GM12878 (cell line): ENCODE measurements at regions of chr20 and their contacts with region 1.

Region 1: GRCh38 chr20:53869466-53870258 is 200.7 kb downstream of the BCAS1 start:
- DNase-seq: peak; percentile 91
- ATAC-seq: peak; percentile 73
- H3K4me3 ChIP-seq: no peak overlapping the region
- H3K27ac ChIP-seq: peak overlapping the region; percentile 68
- H3K4me1 ChIP-seq: peaks cover 51% of the 10 kb centered on the region
- H3K27me3 ChIP-seq: no peaks in the 10 kb centered on the region
- CTCF ChIP-seq: peak; percentile 85 to 93 (median 87)
- EP300 ChIP-seq: peak in 1 of 2 experiments; percentile 61; a peak in 2 of 4 replicates
- POLR2A ChIP-seq: no peak
- RAD21 ChIP-seq: peak; percentile 86

Region 2: GRCh38 chr20:53652090-53652858 is 217.4 kb before region 1 on chr20:
- CTCF ChIA-PET with region 1: interaction called, 3 read pairs
- POLR2A ChIA-PET with region 1: interaction called, 4 read pairs
- RAD21 ChIA-PET with region 1: interaction called, 10 read pairs
- SMC1A ChIA-PET with region 1: interaction called, 12 read pairs
- in situ Hi-C with region 1: no loop called
- intact Hi-C with region 1: loop called (anchors 2 kb)
- DNase-seq: peak; percentile 93
- ATAC-seq: peak; percentile 76
- H3K4me3 ChIP-seq: peak overlapping the region; percentile 30; the same call in 1 of the 2 replicates
- H3K27ac ChIP-seq: peak overlapping the region; percentile 99
- H3K4me1 ChIP-seq: peaks cover 39% of the 10 kb centered on the region
- H3K27me3 ChIP-seq: no peaks in the 10 kb centered on the region
- CTCF ChIP-seq: no peak
- EP300 ChIP-seq: peak; percentile 68 to 72; a peak in 2 of 4 replicates
- POLR2A ChIP-seq: no peak
- RAD21 ChIP-seq: peak; percentile 17; the same call in 1 of the 2 replicates

Region 3: DNA sequence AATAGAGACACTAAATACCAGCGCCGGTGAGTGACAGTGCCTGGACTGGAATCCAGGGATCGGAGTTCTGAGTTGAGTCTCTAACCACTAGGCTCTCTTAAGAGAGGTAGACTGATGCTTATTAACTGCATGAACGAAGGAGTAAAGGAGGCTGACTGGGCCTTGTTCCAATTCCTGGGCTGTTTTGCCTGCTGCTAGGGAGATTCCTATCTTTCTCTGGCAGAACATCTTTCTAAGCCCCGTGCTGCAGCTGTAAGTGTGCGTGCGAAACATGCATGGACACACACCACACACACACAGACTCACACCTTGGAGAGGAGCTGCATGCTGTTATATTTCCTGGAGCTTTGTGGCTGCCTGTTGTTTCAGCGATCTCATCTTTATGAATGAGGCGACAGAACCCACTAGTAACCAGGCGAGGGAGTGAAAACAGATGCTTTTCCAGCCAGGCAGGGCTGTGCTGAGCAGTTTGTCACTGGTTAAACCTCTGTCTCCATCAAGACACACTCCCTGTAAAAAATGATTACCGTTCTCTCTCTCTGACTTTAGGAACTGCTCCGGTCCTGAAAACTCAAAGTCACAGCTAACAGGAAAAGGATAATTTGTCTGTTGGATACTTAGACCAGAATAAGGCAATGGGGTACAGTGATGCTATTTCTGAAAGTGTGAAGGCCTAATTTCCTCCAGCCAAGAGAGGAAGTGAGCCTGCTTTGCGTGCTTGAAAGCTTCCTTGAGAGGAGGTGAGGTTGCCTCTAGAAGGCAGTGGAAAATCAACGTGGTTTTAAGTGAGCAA is 118.6 kb before region 1 on chr20:
- CTCF ChIA-PET with region 1: interaction called, 7 read pairs
- POLR2A ChIA-PET with region 1: interaction called, 3 read pairs
- RAD21 ChIA-PET with region 1: interaction called, 30 read pairs
- SMC1A ChIA-PET with region 1: interaction called, 20 read pairs
- in situ Hi-C with region 1: no loop called
- intact Hi-C with region 1: loop called (anchors 5 kb)
- DNase-seq: peak; percentile 69
- ATAC-seq: peak; percentile 83
- H3K4me3 ChIP-seq: peak overlapping the region; percentile 2; the same call in 1 of the 2 replicates
- H3K27ac ChIP-seq: peak overlapping the region; percentile 99
- H3K4me1 ChIP-seq: peaks cover 64% of the 10 kb centered on the region
- H3K27me3 ChIP-seq: no peaks in the 10 kb centered on the region
- CTCF ChIP-seq: no peak
- EP300 ChIP-seq: peak; percentile 56 to 89; a peak in 3 of 4 replicates
- POLR2A ChIP-seq: peak; percentile 45; the same call in 1 of the 2 replicates
- RAD21 ChIP-seq: peak; percentile 47

Region 4: DNA sequence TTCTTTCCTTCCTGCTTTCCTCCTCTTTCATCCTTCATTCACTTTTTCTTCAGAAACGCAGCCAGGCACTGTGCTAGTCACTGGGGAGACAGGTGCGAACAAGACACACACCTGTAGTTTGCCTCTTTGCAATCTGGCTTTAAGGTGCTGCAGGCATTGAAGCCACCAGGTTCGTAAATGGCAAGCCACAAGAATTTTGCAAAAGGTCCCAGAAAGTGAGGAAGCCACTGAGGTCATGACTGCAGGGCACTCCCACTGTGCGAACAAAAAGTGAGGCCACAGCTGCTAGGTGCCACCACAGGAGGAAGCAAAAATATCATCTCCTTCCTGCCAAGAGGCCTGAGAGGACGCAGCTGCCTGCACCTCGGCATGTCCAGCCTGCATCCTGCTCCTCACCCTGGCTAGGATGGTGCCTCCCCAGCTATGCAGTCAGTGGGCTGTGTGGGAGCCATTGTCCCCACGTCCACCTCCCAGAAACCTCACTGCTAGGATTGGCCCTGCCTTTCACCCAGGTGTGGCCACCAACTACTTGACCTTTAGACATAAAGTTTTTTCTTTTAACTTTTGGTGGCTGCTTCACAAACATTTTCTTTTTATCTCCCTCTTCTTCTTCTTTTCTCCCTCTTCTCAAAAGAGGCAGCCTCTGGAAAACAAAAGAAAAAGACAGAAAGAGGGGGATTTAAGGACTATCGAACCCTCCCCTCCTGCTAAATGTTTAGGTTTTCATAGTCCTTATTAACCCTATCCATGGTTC is 30.1 kb before region 1 on chr20:
- CTCF ChIA-PET with region 1: interaction called, 6 read pairs
- POLR2A ChIA-PET with region 1: interaction called, 16 read pairs
- RAD21 ChIA-PET with region 1: interaction called, 18 read pairs
- SMC1A ChIA-PET with region 1: interaction called, 49 read pairs
- in situ Hi-C with region 1: no loop called
- intact Hi-C with region 1: loop called (anchors 5 kb)
- DNase-seq: peak; percentile 96
- ATAC-seq: peak; percentile 78
- H3K4me3 ChIP-seq: no peak overlapping the region
- H3K27ac ChIP-seq: peak overlapping the region; percentile 70
- H3K4me1 ChIP-seq: peaks cover 47% of the 10 kb centered on the region
- H3K27me3 ChIP-seq: no peaks in the 10 kb centered on the region
- CTCF ChIP-seq: no peak
- EP300 ChIP-seq: peak; percentile 39 to 54; a peak in 2 of 4 replicates
- POLR2A ChIP-seq: peak; percentile 53; the same call in 1 of the 2 replicates
- RAD21 ChIP-seq: 0 out of 2 replicates have a peak, but pooled peaks have one; percentile 3

Region 5: DNA sequence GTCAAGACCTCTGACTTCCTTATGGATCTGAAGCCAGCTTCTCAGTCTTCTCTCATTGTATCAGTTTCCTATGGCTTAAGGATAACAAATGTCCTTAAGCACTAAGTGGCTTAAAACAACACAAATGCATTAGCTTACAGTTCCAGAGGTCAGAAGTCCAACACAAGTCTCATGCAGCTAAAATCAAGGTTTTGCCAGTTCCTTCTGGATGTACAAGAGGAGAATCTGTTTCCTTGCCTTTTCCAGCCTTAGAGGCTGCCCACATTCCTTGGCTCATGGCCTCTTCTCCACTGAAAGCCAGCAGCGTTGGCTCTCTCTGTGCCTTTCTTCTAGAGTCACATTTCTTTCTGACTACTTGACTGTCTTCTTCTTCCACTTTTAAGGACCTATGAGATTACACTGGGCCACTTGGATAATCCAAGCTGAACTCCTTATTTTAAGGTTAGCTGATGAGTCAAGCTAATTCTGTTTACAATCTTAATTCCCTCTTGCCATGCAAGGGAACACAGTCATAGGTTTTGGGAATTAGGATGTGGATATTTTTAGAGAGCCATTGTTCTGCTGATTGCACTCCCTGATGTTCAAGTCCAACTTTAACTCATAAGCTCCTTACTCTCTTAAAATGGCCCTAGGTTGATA is 21.8 kb after region 1 on chr20:
- CTCF ChIA-PET with region 1: interaction called, 17 read pairs
- POLR2A ChIA-PET with region 1: interaction called, 10 read pairs
- RAD21 ChIA-PET with region 1: interaction called, 26 read pairs
- SMC1A ChIA-PET with region 1: interaction called, 56 read pairs
- in situ Hi-C with region 1: no loop called
- intact Hi-C with region 1: loop called (anchors 1 kb)
- DNase-seq: no peak
- ATAC-seq: no peak
- H3K4me3 ChIP-seq: no peak overlapping the region
- H3K27ac ChIP-seq: no peak overlapping the region
- H3K4me1 ChIP-seq: peaks cover 25% of the 10 kb centered on the region
- H3K27me3 ChIP-seq: no peaks in the 10 kb centered on the region
- CTCF ChIP-seq: no peak
- EP300 ChIP-seq: no peak
- POLR2A ChIP-seq: no peak
- RAD21 ChIP-seq: no peak

Region 6: GRCh38 chr20:53915446-53916172 is 45.9 kb after region 1 on chr20:
- CTCF ChIA-PET with region 1: interaction called, 30 read pairs
- POLR2A ChIA-PET with region 1: interaction called, 17 read pairs
- RAD21 ChIA-PET with region 1: interaction called, 74 read pairs
- SMC1A ChIA-PET with region 1: interaction called, 59 read pairs
- in situ Hi-C with region 1: no loop called
- intact Hi-C with region 1: loop called (anchors 1 kb)
- DNase-seq: peak; percentile 89
- ATAC-seq: peak; percentile 84
- H3K4me3 ChIP-seq: peak overlapping the region; percentile 56
- H3K27ac ChIP-seq: peak overlapping the region; percentile 97
- H3K4me1 ChIP-seq: peaks cover 31% of the 10 kb centered on the region
- H3K27me3 ChIP-seq: no peaks in the 10 kb centered on the region
- CTCF ChIP-seq: peak; percentile 80 to 93 (median 90)
- EP300 ChIP-seq: no peak
- POLR2A ChIP-seq: peak; percentile 31; the same call in 1 of the 2 replicates
- RAD21 ChIP-seq: peak; percentile 94

Region 7: GRCh38 chr20:54062812-54063280 is 193.2 kb after region 1 on chr20:
- CTCF ChIA-PET with region 1: interaction called, 6 read pairs
- POLR2A ChIA-PET with region 1: no interaction called
- RAD21 ChIA-PET with region 1: interaction called, 7 read pairs
- SMC1A ChIA-PET with region 1: interaction called, 8 read pairs
- in situ Hi-C with region 1: no loop called
- intact Hi-C with region 1: loop called (anchors 5 kb)
- DNase-seq: peak; percentile 82
- ATAC-seq: peak; percentile 42
- H3K4me3 ChIP-seq: no peak overlapping the region
- H3K27ac ChIP-seq: 0 out of 2 replicates have a peak overlapping the region, but pooled peaks have one; percentile 73
- H3K4me1 ChIP-seq: peaks cover 29% of the 10 kb centered on the region
- H3K27me3 ChIP-seq: no peaks in the 10 kb centered on the region
- CTCF ChIP-seq: peak; percentile 59 to 82 (median 73)
- EP300 ChIP-seq: no peak
- POLR2A ChIP-seq: no peak
- RAD21 ChIP-seq: peak; percentile 94